ENCODE measurements at regions of chr5 and their contacts with region 1.

Region 1: DNA sequence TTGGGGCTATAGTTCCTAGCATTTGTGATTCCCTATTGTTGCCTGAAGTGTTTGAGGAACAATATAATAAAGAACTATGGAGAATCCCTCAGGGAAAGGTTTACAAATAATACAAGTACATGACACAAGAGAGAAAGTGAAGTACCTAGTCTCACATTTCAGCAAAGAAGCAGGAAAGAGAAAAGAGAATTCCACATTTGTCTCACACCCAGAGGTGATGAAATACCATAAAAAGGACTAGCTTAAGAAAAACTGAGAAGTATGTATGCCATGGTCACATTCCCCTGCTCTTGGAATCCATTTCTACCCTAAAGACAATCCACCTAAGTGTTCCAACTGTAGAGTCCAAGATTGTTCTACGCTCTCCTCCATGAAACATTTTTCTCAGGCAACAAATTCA is 79.0 kb upstream of the TARS1 start:
- DNase-seq: no peak
- H3K4me3 ChIP-seq: no peak overlapping the region
- H3K4me3 Mint-ChIP-seq: no peak overlapping the region
- H3K27ac Mint-ChIP-seq: no peak overlapping the region
- H3K4me1 ChIP-seq: no peaks in the 10 kb centered on the region
- H3K4me1 Mint-ChIP-seq: no peaks in the 10 kb centered on the region
- H3K27me3 ChIP-seq: no peaks in the 10 kb centered on the region
- H3K27me3 Mint-ChIP-seq: peaks cover 7% of the 10 kb centered on the region
- CTCF ChIP-seq: no peak

Region 2: DNA sequence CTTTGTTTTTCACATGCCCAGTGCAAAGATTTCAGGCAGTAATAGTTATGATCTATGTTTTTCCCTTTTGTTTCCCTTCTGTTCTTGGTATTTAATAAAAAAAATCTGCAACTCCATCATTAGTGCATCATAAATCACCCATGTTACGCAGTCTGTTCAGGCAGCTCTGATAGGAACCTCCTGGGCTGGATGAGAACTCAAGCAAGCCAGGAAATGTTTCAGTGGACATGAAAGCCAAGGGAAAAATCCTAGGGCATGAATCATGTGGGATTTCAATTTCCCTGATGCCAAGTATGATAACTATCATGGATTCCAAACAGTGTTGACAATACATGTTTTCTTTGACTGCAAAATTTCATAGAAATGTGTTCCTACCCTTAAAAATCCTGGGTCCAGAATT is 40.8 kb before region 1 on chr5:
- CTCF ChIA-PET with region 1: no interaction called
- POLR2A ChIA-PET with region 1: no interaction called
- intact Hi-C with region 1: no loop called
- DNase-seq: no peak
- H3K4me3 ChIP-seq: no peak overlapping the region
- H3K4me3 Mint-ChIP-seq: no peak overlapping the region
- H3K27ac Mint-ChIP-seq: no peak overlapping the region
- H3K4me1 ChIP-seq: no peaks in the 10 kb centered on the region
- H3K4me1 Mint-ChIP-seq: no peaks in the 10 kb centered on the region
- H3K27me3 ChIP-seq: no peaks in the 10 kb centered on the region; the same call in 1 of the 2 replicates
- H3K27me3 Mint-ChIP-seq: peaks cover 4% of the 10 kb centered on the region
- CTCF ChIP-seq: no peak

Region 3: DNA sequence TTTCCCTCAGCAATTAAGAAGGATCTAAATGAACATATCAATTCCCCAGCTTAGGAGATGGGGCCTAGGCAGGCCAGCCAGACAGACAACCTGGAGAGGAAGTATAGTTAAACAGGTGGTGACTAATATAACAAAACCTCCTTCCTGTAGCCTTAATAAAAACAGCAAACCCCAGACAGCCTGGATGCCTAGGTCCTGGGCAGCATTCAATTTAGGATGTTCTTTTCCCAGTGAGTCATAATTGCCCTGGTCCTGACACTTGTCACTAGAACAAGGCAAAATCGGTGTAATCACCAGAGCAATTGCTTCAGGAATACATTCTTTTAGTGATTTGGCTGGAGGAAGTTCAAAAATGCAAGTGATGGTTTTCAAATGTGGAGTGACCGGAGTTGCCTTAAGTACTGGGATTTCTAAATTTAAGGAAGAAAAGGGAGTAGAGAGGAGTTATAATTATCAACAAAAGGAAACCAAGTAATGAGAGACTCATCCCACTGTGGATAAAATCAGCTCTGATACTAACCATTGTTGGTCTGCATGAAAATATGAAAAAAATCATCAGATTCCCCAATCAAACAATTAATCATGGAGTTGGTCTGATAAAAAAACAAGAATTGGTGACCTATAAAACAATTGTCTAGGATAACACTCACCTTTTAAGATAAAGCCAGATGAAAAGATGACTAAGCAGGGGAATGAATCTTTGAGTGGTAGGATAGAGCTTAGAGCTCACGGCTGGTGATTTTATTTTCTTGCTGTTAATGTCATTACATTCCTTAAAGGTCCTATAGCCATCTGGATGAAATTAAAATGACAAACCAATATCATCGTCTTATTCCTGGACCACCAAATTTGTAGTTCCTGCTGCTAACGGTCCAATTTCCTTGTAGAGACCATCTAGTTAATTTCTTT is 40.0 kb after region 1 on chr5:
- CTCF ChIA-PET with region 1: no interaction called
- POLR2A ChIA-PET with region 1: no interaction called
- intact Hi-C with region 1: loop called (anchors 1 kb)
- DNase-seq: no peak
- H3K4me3 ChIP-seq: no peak overlapping the region
- H3K4me3 Mint-ChIP-seq: no peak overlapping the region
- H3K27ac Mint-ChIP-seq: no peak overlapping the region
- H3K4me1 ChIP-seq: no peaks in the 10 kb centered on the region
- H3K4me1 Mint-ChIP-seq: no peaks in the 10 kb centered on the region
- H3K27me3 ChIP-seq: no peaks in the 10 kb centered on the region
- H3K27me3 Mint-ChIP-seq: no peaks in the 10 kb centered on the region
- CTCF ChIP-seq: no peak

Region 4: GRCh38 chr5:34517249-34517648 is 1155.5 kb after region 1 on chr5:
- CTCF ChIA-PET with region 1: no interaction called
- POLR2A ChIA-PET with region 1: no interaction called
- intact Hi-C with region 1: no loop called
- DNase-seq: no peak
- H3K4me3 ChIP-seq: no peak overlapping the region
- H3K4me3 Mint-ChIP-seq: no peak overlapping the region
- H3K27ac Mint-ChIP-seq: no peak overlapping the region
- H3K4me1 ChIP-seq: peaks cover 10% of the 10 kb centered on the region
- H3K4me1 Mint-ChIP-seq: peaks cover 22% of the 10 kb centered on the region
- H3K27me3 ChIP-seq: no peaks in the 10 kb centered on the region
- H3K27me3 Mint-ChIP-seq: no peaks in the 10 kb centered on the region
- CTCF ChIP-seq: no peak

Measured in Caco-2 (cell line).